ENCODE measurements at regions of chr13 and their contacts with region 1.

Region 1: GRCh38 chr13:24574847-24575246 is 62.3 kb upstream of the PARP4 start:
- DNase-seq: no peak
- ATAC-seq: peak; percentile 80
- H3K4me3 Mint-ChIP-seq: no peak overlapping the region
- H3K27ac Mint-ChIP-seq: no peak overlapping the region
- H3K4me1 Mint-ChIP-seq: peaks cover 16% of the 10 kb centered on the region
- H3K27me3 Mint-ChIP-seq: peaks cover 5% of the 10 kb centered on the region

Region 2: DNA sequence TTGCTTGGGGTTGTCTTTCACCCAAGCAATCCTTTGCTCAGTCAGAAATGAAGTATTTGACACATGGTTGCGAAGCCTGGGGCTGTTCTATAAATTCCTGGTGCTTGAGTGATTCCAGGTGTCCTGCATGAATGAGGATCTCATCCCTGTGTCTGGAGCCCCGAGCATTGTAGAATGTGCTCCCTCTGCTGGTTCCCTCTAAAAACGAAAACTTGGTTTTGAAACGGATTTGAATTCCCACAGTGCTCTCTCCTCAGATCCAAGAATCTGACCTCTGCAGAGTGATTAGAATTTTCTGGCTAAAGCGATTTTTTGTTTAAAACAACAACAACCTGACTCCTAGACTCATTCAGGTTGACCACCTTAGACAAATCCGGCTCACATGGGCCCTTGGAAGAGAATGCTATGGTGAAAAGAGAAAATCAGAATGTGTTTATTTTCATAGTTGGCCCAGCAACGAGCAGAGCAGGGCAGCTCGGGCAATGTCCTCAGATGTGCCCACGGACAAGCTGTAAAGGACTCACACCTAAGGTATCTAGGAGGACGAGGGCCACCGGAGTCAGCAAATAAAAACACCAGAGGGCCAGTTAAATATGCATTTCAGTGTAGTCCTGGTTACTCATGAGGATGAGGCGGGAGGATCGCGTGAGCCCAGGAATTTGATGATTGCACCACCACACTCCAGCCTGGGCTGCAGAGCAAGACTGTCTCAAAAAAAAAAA is 96.7 kb after region 1 on chr13:
- CTCF ChIA-PET with region 1: interaction called, 3 read pairs
- POLR2A ChIA-PET with region 1: no interaction called
- intact Hi-C with region 1: loop called (anchors 1 to 5 kb)
- DNase-seq: no peak
- ATAC-seq: peak; percentile 47
- H3K4me3 Mint-ChIP-seq: no peak overlapping the region
- H3K27ac Mint-ChIP-seq: no peak overlapping the region
- H3K4me1 Mint-ChIP-seq: peaks cover 9% of the 10 kb centered on the region
- H3K27me3 Mint-ChIP-seq: peaks cover 8% of the 10 kb centered on the region

Measured in activated CD4-positive, alpha-beta T cell treated with anti-CD3 and anti-CD28 coated beads for 36 hours (primary cell).